Cardiac septum (tissue), 1 donor: ENCODE measurements at regions of chr11 and their contacts with region 1.

Region 1: GRCh38 chr11:126115816-126116331 is 53.2 kb upstream of the CDON start:
- DNase-seq: no peak

Region 2: DNA sequence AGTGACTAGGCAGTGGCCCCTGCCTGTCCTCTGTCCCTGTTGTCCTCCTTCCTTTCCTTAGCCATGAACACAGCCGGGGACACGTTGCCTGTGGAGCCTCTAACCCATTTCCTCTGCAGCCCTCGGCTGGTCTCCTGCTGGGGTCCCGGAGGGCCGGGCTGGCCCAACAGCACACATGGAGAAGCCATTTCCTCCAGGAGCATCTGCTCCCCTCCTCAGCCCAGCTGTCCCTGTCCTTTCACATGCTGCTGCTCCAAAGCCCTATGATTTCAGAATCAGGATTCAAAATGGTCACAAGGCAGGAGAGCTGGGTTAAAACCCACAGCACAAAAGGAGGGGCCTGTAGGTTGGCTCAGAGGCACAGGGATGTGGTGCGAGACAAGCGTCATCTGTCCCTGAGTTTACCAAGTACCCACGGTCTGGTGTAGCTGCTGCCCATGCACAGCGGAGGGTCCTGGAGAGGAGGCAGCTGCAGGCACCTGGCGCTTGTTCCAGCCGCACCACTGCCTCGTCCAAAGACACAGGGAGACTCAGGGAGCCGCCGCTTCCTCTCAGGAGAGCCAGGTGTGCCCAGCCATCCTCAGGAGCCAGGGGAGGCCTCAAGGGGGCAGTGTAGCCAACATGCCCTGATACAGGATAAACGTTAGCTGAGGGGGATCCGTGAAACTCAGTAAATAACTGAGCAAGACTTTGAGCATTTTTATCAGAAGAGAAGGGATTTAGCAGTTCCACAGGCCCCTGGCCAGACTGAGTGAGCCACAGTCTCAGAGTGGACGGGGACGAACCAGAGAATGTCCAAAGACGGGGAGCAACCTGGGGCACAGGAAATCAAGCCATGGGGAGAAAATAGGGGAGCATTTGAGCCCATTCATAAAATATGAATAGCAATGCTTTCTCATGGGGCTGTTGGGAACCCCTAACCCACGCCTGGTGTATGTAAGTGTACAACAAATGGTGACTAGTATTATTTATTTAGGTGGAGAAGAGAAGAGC is 174.0 kb before region 1 on chr11:
- intact Hi-C with region 1: loop called (anchors 5 kb)
- DNase-seq: peak; percentile 71

Region 3: DNA sequence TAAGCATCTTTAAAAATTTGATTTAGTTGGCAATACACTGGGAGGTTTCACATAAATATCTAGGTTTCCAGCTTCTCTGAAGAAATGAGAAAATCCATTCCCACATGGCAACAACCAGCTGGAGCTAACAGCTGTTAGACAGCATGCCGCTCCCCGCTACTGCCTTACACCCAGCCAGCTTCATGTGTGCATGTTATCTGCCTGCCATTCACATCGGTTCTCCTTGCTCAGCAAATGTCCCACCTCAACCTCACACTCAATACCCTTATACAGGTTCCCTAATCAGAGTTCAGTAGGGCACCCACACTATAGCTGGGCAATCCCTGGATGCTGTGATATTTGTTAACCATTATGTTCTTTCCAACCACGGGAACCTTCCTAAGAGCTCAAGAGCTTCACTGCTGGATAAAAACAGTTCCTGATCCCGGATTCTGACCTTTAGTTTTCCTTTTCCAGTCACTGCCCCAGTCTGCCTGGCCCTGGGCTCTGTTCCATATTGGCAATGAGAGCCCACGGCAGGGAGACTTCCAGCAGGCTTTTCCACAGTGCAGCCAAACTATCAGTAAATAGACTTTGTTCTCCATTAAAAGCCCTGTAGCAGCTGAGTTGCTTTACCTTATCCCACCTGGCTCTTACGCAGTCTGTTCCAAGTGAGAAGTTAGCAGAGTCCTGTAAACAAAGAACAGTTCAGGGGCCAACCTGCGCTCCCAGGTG is 86.9 kb after region 1 on chr11:
- intact Hi-C with region 1: loop called (anchors 5 kb)
- DNase-seq: no peak

Region 4: GRCh38 chr11:126217491-126217890 is 101.6 kb after region 1 on chr11:
- intact Hi-C with region 1: no loop called
- DNase-seq: no peak